ENCODE measurements at regions of chr17 and their contacts with region 1.

Region 1: GRCh38 chr17:57375770-57376193 is 119.5 kb downstream of the MSI2 start:
- DNase-seq: no peak
- H3K4me3 ChIP-seq: no peak overlapping the region
- H3K27ac ChIP-seq: no peak overlapping the region
- H3K4me1 ChIP-seq: no peaks in the 10 kb centered on the region
- H3K27me3 ChIP-seq: no peaks in the 10 kb centered on the region
- CTCF ChIP-seq: no peak
- POLR2A ChIP-seq: no peak

Region 2: DNA sequence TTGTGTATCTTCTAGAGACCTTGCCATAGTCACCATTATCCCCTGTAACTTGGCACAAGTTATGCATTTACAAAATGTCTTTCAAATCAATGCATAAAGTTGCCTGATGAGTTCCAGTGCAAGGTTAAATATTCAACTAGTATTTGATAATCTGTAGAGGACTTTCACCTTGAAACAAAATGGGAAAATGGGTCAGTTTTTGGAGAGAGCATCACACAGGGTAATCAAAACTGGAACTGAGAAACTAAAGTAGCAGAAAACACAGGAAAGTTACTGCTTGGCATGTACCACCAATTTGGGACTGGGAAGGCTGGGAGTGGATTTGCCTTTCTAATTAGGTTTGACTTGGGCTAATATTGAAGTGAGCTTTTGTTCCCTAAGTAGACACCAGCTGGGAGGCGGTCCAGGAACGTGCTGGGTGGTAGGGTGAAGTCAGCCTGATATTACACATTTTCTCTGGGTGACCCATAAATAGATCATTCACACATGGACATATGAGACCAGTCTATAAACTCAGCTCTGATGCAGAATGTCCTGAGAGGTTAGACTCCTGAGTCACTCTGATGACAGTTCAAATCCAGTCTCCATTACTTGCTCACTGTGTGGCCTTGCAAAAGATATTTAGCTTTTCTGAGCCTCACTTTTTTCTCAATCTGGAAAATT is 1472.6 kb before region 1 on chr17:
- intact Hi-C with region 1: loop called (anchors 10 kb)
- DNase-seq: no peak
- H3K4me3 ChIP-seq: no peak overlapping the region
- H3K27ac ChIP-seq: no peak overlapping the region
- H3K4me1 ChIP-seq: no peaks in the 10 kb centered on the region
- H3K27me3 ChIP-seq: no peaks in the 10 kb centered on the region
- CTCF ChIP-seq: no peak
- POLR2A ChIP-seq: no peak

Region 3: GRCh38 chr17:57357399-57357807 is 18.4 kb before region 1 on chr17:
- intact Hi-C with region 1: no loop called
- DNase-seq: peak; percentile 86
- H3K4me3 ChIP-seq: peak overlapping the region in 2 of 3 donors; percentile 2 to 3
- H3K27ac ChIP-seq: peak overlapping the region; percentile 86 to 87
- H3K4me1 ChIP-seq: no peaks in the 10 kb centered on the region
- H3K27me3 ChIP-seq: no peaks in the 10 kb centered on the region
- CTCF ChIP-seq: no peak
- POLR2A ChIP-seq: no peak

Region 4: DNA sequence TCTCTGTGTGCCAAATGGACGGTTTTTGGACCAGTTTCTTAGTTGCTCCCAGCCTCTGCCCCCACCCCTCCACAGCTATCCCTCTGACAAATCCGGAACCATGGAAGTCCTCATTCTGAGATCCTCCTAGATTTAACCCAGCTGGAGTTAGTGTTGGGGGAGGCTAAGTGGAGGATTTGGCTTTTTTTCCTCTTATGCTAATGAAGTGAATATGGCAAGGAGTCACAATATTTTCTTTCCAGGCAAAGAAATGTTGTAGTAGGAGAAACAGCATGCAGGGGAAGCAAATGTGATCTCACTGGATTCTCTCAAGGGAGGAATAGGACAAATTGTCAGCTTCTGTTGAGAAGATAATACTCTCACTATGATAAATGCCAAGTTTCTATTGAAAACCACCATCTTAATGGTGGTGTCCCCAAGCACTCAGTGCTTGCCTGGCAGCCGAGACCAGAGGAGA is 40.0 kb after region 1 on chr17:
- intact Hi-C with region 1: no loop called
- DNase-seq: no peak
- H3K4me3 ChIP-seq: no peak overlapping the region
- H3K27ac ChIP-seq: no peak overlapping the region
- H3K4me1 ChIP-seq: no peaks in the 10 kb centered on the region
- H3K27me3 ChIP-seq: no peaks in the 10 kb centered on the region
- CTCF ChIP-seq: no peak
- POLR2A ChIP-seq: no peak

Region 5: GRCh38 chr17:57434361-57434760 is 58.6 kb after region 1 on chr17:
- intact Hi-C with region 1: loop called (anchors 2 kb)
- DNase-seq: no peak
- H3K4me3 ChIP-seq: no peak overlapping the region
- H3K27ac ChIP-seq: no peak overlapping the region
- H3K4me1 ChIP-seq: no peaks in the 10 kb centered on the region
- H3K27me3 ChIP-seq: no peaks in the 10 kb centered on the region
- CTCF ChIP-seq: no peak
- POLR2A ChIP-seq: no peak